Dendritic cell treated with granulocyte-macrophage colony-stimulating factor and Interleukin-4, amounts not matched to agents 40 ng/mL and 50 ng/mL, for 4 days (primary cell): ENCODE measurements at regions of chr17 and their contacts with region 1.

Region 1: DNA sequence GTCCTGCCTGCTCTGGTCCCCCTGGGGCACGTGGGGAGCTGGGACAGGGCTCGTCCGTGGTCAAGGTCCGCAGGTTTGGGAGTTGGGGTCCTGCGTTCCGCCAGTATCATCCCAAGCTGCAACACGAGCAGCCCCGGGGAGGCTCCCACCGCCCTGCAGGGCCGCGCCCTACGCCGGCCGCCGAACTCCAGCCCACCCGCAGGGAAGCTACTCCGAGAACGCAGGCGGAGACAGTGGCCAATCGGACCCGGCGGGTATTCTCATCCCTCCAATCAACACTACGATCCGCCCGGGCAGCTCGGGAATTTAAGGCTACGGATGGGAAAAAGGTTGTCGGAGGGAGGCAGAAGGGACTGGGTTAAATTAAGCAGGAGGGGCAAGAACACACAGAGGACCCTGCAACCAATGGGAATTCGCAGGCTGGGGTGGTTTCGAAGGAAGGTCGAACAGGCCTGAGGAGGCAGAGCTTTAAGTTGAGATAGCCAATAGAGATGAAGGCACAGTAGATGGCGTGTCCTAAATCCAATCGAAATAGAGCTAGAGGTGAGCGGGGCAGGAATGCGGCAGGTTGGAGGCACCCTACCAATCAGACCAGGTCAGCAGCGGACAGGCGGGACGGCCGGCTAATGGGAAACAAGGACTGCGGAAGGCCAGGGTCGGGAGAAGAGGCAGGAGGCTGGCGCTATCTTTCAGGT is 626 bp downstream of the SPAG7 start:
- H3K4me3 Mint-ChIP-seq: no peak overlapping the region
- H3K27ac Mint-ChIP-seq: no peak overlapping the region
- H3K4me1 Mint-ChIP-seq: peaks cover 27% of the 10 kb centered on the region
- H3K27me3 Mint-ChIP-seq: no peaks in the 10 kb centered on the region

Region 2: GRCh38 chr17:4908301-4908700 is 58.7 kb before region 1 on chr17:
- intact Hi-C with region 1: loop called (anchors 1 kb)
- H3K4me3 Mint-ChIP-seq: no peak overlapping the region
- H3K27ac Mint-ChIP-seq: no peak overlapping the region
- H3K4me1 Mint-ChIP-seq: peaks cover 4% of the 10 kb centered on the region
- H3K27me3 Mint-ChIP-seq: peaks cover 22% of the 10 kb centered on the region

Region 3: GRCh38 chr17:4928881-4929280 is 38.1 kb before region 1 on chr17:
- intact Hi-C with region 1: no loop called
- H3K4me3 Mint-ChIP-seq: no peak overlapping the region
- H3K27ac Mint-ChIP-seq: no peak overlapping the region
- H3K4me1 Mint-ChIP-seq: peaks cover 51% of the 10 kb centered on the region
- H3K27me3 Mint-ChIP-seq: peaks cover 14% of the 10 kb centered on the region

Region 4: DNA sequence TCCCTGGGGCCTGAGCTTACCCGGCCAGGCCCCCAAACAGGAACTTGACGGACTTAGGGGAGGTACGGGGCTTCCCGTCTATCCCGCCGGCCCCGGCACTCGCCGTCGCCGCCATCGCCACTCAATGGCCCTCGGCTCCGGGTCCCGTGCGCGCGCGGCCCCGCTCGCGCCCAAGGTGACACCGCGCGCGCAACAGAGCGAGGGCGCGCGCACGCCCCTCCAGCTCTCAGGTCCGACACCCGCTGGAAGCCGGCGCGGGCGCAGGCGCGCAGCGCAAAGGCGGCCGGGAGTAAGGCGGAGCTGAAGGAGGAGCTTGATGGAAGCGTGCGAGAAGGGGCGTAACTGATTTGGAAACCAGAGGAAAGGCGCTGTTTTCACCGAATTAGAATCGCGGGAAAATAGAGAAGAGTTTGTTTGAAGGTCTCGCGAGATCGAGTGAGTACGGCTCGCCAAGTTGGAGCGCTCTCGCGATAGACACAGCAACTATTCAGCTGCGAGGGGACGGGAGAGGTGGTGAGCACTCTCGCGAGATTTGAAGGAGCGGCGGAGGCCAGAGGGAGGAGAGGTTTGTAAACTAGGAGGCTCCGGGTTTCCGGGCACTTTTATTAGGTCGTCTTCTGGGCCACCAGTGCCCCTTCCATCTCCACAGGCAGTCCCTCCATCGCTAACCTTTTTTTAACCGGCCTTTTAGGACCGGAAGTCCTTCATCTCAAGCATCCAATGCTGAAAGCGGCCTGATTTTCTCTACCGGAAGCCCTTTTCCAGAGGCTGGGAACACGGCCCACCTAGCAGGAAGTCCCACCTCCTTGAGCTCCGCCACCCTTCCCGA is 27.0 kb before region 1 on chr17 and contains the starts of genes RNF167 and SLC25A11:
- intact Hi-C with region 1: loop called (anchors 2 kb)
- H3K4me3 Mint-ChIP-seq: peak within 1 kb of the TSS; percentile 92
- H3K27ac Mint-ChIP-seq: peak within 1 kb of the TSS; percentile 90
- H3K4me1 Mint-ChIP-seq: peaks cover 83% of the 10 kb centered on the region
- H3K27me3 Mint-ChIP-seq: no peaks in the 10 kb centered on the region

Region 5: DNA sequence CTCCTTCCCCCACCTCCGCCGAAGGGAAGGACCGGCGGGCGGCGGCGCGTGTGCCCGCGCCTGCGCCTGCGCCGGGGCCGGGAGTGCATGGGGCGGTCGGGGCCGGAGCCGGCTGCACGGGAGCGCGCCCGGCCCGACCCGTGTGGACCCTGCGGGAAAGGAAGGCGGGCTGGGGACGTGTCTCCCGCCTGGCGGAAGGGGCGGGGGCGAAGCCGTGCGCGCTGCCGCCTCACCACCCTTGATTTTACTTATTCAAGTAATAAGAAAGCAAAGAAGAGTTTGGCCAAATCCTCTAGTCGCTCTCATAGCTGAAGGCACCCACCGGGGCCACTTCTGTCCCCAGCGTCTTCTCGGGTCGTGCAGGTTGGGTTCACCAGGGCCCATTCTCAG is 18.1 kb before region 1 on chr17:
- intact Hi-C with region 1: loop called (anchors 1 kb)
- H3K4me3 Mint-ChIP-seq: peak overlapping the region; percentile 84
- H3K27ac Mint-ChIP-seq: peak overlapping the region; percentile 90
- H3K4me1 Mint-ChIP-seq: peaks cover 60% of the 10 kb centered on the region
- H3K27me3 Mint-ChIP-seq: no peaks in the 10 kb centered on the region

Region 6: DNA sequence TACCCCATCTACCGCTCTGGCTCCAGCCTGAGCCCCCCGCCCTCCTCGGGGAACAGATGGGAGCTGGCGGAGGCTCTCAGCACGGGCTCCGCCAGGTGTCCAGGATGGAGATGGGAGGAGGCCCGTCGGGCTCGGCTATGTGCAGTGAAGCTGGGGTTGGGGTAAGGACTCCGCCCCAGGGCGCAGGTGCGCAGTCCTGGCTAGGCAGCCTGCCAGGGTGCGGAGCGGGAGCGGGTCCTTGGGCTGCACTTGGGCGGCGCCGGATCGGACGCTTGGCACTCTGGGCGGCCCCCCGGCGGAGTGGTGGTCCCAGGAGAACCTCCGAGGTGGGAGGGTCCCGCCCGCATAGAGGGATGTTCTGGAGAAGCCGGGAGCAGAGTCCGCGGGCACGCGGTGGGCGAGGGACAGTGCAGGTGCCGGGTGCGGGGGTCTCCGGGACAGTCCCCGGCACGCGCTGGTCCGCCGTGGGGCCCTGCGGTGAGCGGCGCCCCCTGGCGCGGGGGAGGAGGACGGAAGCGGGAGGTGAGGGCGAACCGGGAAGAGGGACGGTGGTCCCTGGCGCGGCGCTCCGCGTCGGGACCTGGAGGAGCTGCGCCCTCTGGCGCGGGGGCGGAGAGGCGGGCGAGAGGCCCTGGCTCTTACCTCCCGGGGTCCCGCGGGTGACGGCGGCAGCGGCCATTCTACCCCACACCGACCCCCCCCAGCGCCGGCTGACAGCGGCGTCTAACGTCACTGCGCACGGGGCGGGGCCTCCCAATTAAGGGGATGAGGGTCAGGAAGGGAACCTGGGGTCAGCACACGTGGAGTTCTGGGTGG is 20.2 kb after region 1 on chr17 and contains the start of gene CAMTA2:
- intact Hi-C with region 1: loop called (anchors 2 kb)
- H3K4me3 Mint-ChIP-seq: peak within 1 kb of the TSS; percentile 91
- H3K27ac Mint-ChIP-seq: peak within 1 kb of the TSS; percentile 93
- H3K4me1 Mint-ChIP-seq: peaks cover 62% of the 10 kb centered on the region
- H3K27me3 Mint-ChIP-seq: no peaks in the 10 kb centered on the region